Sigmoid colon (tissue), 7 donors: ENCODE measurements at regions of chr1 and their contacts with region 1.

Region 1: DNA sequence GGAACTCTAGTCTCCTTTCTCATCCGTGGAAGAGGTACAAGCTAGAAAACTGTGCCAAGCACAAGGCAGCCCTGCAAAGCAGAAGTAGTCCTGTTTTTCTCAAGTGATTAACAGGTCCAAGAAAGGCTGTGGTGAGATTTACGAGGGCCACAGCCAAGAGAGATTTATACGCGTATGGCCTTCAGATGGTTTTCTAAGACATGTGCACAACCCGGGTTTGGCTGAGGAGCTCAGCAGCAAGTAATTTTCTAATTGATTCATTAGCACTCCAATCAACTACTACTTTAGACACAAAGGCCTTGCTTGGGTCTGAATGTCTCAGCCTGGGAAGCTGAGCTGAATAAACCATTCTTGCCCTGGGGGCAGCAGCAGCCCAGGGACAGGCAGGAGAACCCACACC is 55.8 kb downstream of the SSBP3 start:
- DNase-seq: no peak
- H3K4me3 ChIP-seq: no peak overlapping the region
- H3K27ac ChIP-seq: peak overlapping the region in 3 of 4 donors; percentile 66 to 70 (median 69)
- H3K4me1 ChIP-seq: peaks cover 0 to 60% (median 49%) of the 10 kb centered on the region in 4 donors
- H3K27me3 ChIP-seq: no peaks in the 10 kb centered on the region
- CTCF ChIP-seq: no peak
- EP300 ChIP-seq: no peak
- POLR2A ChIP-seq: no peak

Region 2: DNA sequence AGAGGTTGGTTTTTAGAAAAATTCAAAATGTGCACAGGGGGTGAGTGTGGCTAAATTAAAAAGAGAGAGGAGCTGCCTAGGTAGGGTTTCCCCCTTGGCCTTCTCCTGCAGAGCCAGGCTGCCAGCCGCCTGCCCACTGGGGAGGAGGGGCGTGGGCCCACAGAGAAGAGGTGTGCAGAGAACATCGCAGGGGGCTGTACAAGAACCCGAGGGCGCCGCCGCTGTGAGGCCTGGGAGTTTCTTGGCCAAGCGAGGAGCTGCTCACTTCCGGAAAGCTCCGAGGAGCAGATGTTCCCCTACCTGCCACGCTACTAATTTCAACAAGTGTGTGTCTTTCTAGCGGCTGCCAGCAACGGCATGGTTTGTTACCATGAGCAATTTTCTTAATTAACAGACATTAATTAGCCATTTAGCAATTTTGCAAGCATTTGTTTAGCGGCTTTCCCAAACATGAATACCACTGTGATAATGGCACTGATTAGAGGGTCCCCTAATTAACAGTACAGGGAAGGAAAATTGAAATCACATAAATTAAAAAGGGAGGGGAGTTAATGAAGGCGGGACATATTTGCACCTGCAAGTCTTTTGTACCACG is 90.7 kb before region 1 on chr1:
- intact Hi-C with region 1: loop called (anchors 5 kb)
- DNase-seq: no peak
- H3K4me3 ChIP-seq: no peak overlapping the region
- H3K27ac ChIP-seq: no peak overlapping the region
- H3K4me1 ChIP-seq: peaks cover 0 to 8% (median 0%) of the 10 kb centered on the region in 4 donors
- H3K27me3 ChIP-seq: no peaks in the 10 kb centered on the region
- CTCF ChIP-seq: no peak
- EP300 ChIP-seq: no peak
- POLR2A ChIP-seq: no peak

Region 3: GRCh38 chr1:54297596-54298283 is 52.6 kb before region 1 on chr1:
- intact Hi-C with region 1: no loop called
- DNase-seq: no peak
- H3K4me3 ChIP-seq: no peak overlapping the region
- H3K27ac ChIP-seq: peak overlapping the region; percentile 58 to 80 (median 73)
- H3K4me1 ChIP-seq: peaks cover 0 to 79% (median 61%) of the 10 kb centered on the region in 4 donors
- H3K27me3 ChIP-seq: no peaks in the 10 kb centered on the region
- CTCF ChIP-seq: no peak
- EP300 ChIP-seq: no peak
- POLR2A ChIP-seq: no peak